ENCODE measurements at regions of chr5 and their contacts with region 1.

Region 1: GRCh38 chr5:177357459-177358351 is at the start of gene RGS14:
- DNase-seq: peak; percentile 74
- ATAC-seq: peak; percentile 90
- H3K4me3 Mint-ChIP-seq: peak within 1 kb of the TSS; percentile 82
- H3K27ac Mint-ChIP-seq: peak within 1 kb of the TSS; percentile 79
- H3K4me1 Mint-ChIP-seq: peaks cover 68% of the 10 kb centered on the region
- H3K27me3 Mint-ChIP-seq: no peaks in the 10 kb centered on the region
- total RNA-seq, gene RGS14: 43.8 to 62.0 TPM

Region 2: DNA sequence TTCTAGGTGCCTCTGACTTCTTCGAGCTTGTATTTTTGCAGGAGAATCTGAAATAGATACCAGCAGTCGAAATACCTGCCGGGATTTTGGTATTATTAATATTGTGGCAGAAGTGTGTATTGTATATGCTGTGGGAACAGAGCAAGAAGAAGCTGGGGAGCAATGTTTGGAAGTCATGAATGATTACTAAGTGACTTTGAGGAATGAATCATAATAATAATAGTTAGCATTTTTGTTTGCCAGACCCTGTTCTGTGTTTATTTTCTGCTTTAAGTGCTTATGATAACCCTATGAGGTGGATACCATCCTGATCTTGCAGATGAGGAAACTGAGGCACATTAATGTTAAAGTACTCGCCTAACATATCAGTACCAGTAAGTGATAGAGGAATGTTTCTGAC is 86.6 kb before region 1 on chr5:
- CTCF ChIA-PET with region 1: no interaction called
- POLR2A ChIA-PET with region 1: no interaction called
- intact Hi-C with region 1: no loop called
- DNase-seq: no peak
- ATAC-seq: no peak
- H3K4me3 Mint-ChIP-seq: no peak overlapping the region
- H3K27ac Mint-ChIP-seq: no peak overlapping the region
- H3K4me1 Mint-ChIP-seq: no peaks in the 10 kb centered on the region
- H3K27me3 Mint-ChIP-seq: no peaks in the 10 kb centered on the region

Region 3: DNA sequence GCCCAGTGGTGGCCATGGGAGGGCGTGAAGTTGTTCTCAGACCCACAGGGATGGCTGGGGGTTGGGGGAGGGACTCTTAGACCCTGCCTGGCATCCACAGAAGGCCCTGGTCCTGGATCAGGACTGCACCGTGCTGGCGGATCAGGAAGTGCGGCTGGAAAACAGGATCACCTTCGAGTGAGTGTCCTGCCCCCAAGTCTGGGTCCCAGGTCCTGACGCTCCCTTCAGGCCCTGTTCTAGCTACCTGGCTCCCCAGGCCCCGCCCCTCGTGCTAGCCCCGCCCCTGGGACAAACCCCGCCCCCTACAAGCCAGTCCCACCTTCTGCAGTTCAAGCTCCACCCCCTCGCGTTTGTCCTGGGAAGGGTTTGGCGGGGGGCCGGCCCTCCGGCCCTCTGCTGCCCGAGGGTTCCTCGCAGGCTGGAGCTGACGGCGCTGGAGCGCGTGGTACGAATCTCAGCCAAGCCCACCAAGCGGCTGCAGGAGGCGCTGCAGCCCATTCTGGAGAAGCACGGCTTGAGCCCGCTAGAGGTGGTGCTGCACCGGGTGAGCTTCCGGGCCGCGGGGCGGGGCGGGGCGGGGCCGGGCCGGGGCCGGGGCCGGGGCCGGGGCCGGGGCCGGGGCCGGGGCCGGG is 12.9 kb after region 1 on chr5:
- CTCF ChIA-PET with region 1: interaction called, 49 read pairs
- POLR2A ChIA-PET with region 1: interaction called, 3 read pairs
- intact Hi-C with region 1: no loop called
- DNase-seq: peak; percentile 76
- ATAC-seq: peak; percentile 66
- H3K4me3 Mint-ChIP-seq: peak overlapping the region; percentile 53
- H3K27ac Mint-ChIP-seq: no peak overlapping the region
- H3K4me1 Mint-ChIP-seq: peaks cover 70% of the 10 kb centered on the region
- H3K27me3 Mint-ChIP-seq: no peaks in the 10 kb centered on the region

Region 4: GRCh38 chr5:177516604-177517568 is 159.2 kb after region 1 on chr5 and contains the start of gene DDX41:
- CTCF ChIA-PET with region 1: no interaction called
- POLR2A ChIA-PET with region 1: no interaction called
- intact Hi-C with region 1: no loop called
- DNase-seq: peak; percentile 98
- ATAC-seq: peak; percentile 91
- H3K4me3 Mint-ChIP-seq: peak within 1 kb of the TSS; percentile 98
- H3K27ac Mint-ChIP-seq: peak within 1 kb of the TSS; percentile 96
- H3K4me1 Mint-ChIP-seq: peaks cover 48% of the 10 kb centered on the region
- H3K27me3 Mint-ChIP-seq: no peaks in the 10 kb centered on the region
- total RNA-seq, gene DDX41: 192 to 197 TPM

Measured in activated CD4-positive, alpha-beta T cell treated with anti-CD3 and anti-CD28 coated beads for 36 hours (primary cell).